Esophagus squamous epithelium (tissue), 5 donors: ENCODE measurements at regions of chr2 and their contacts with region 1.

Region 1: DNA sequence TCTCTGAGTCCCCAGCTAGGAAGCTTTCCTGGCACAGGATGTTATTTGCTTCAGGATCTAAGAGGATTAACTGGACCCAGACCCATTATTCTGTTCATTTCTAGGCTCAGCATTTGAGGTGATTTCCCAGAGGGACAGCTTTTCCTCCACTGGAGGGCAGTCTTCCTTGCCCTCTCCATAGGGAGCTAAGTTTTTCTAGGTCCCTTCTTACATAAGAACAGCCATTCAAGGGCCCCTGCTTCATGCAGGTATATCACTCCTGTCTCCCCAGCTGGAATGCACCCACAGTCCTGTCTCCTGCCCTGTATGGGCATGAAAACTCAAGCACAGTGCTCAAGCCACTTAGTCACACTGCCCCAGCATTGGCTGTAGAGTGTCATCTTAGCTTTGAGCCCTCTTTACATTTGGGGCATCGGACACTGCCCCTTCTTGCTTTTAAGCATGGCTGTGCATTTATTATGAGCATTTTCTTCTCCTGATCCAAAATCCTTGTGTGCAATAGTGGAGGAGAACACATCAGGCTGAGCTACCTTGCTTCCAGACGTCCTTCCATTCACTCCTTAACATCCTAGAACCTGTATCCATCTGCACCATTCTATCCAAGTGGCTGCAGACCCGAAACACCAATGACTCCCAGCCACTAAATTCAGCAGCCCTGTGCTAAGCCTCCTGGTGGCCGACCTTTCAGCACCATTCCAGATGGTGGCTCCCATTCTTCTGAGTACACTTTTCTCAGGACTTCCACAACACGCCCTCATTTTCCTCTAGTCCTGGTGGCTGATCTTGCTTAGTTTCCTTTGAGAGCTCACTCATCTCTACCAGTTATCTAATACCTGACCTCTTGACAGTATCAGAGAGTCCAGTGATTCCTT is 80.0 kb downstream of the COPS8 start:
- DNase-seq: no peak
- H3K4me3 ChIP-seq: no peak overlapping the region
- H3K27ac ChIP-seq: peak overlapping the region in 3 of 4 donors; percentile 67 to 78 (median 67)
- H3K4me1 ChIP-seq: peaks cover 0 to 5% (median 0%) of the 10 kb centered on the region in 3 donors
- H3K27me3 ChIP-seq: no peaks in the 10 kb centered on the region
- CTCF ChIP-seq: peak in 5 of 6 experiments; percentile 16 to 59 (median 30)
- POLR2A ChIP-seq: no peak

Region 2: DNA sequence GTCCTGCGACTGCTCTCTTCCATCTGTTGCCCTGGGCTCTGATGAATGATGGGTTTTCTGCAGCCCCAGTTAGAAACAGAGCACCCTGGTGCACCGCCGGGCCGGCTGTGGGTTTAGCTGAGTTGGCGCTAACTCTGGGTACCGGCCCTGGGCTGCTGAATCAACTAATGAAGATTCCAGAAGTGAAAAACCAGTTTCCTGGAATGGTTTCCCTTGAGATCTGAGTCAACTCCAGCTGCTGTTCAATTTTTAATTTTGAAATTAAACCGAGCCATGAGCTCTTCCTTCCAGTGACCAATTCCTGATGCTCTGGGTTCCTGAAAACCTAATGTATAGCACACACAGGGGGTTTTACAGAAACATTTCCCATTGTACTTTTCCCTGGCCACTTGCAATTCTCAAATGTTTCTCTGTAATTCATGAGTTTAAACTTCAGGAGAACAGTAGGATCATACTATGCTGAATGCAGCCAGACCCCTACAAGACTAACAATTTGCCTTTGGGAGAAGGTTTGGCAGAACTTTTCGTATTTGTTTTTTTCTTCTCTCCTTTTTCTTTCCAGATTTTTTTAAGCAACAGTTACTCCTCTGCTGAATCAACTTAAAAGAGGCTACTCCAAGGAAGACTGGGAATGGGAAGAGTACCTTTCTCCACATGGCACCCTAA is 242.8 kb after region 1 on chr2:
- intact Hi-C with region 1: loop called (anchors 5 kb)
- DNase-seq: no peak
- H3K4me3 ChIP-seq: peak overlapping the region in 2 of 4 donors; percentile 14 to 47
- H3K27ac ChIP-seq: peak overlapping the region; percentile 48 to 88 (median 84)
- H3K4me1 ChIP-seq: peaks cover 0 to 31% (median 5%) of the 10 kb centered on the region in 3 donors
- H3K27me3 ChIP-seq: peaks cover 0 to 37% (median 0%) of the 10 kb centered on the region in 4 donors
- CTCF ChIP-seq: no peak
- POLR2A ChIP-seq: no peak